ENCODE measurements at regions of chr15 and their contacts with region 1.

Region 1: GRCh38 chr15:89740137-89740536 is 10.9 kb downstream of the MESP1 start:
- DNase-seq: peak; percentile 71
- H3K4me3 Mint-ChIP-seq: no peak overlapping the region
- H3K27ac Mint-ChIP-seq: no peak overlapping the region
- H3K4me1 Mint-ChIP-seq: peaks cover 1% of the 10 kb centered on the region
- H3K27me3 Mint-ChIP-seq: peaks cover 11% of the 10 kb centered on the region

Region 2: DNA sequence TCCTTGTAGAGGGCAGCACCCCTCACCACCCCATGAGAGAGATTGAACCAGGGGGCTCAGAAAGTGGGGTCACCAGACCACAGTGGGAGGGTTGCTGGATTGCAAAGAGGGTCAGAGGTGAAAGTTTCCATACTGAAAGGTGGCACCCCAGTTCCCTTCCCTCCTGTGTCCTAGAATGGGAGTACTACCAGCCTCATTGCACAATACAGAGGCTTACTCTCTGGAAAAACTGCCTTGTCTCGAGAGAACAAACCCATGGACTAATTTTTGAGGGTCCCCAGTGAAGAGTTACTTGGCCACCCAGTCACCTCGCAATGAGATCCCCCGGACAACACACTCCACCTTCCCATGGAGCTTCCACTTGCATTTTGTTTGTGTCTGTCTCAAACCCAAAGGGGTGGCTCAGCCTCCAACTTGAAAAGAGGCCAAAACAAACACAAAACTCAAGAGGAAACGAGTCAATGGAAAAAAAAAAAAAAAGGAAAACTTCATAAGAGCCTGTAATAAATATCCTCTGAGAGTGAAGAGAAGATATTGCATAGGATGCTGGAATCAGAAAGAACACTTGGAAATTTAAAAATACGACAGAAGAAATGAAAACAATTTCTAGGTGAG is 54.6 kb after region 1 on chr15:
- CTCF ChIA-PET with region 1: no interaction called
- intact Hi-C with region 1: no loop called
- DNase-seq: no peak
- H3K4me3 Mint-ChIP-seq: no peak overlapping the region
- H3K27ac Mint-ChIP-seq: no peak overlapping the region
- H3K4me1 Mint-ChIP-seq: no peaks in the 10 kb centered on the region
- H3K27me3 Mint-ChIP-seq: peaks cover 3% of the 10 kb centered on the region

Region 3: GRCh38 chr15:90086868-90087268 is 346.7 kb after region 1 on chr15:
- CTCF ChIA-PET with region 1: interaction called, 4 read pairs
- intact Hi-C with region 1: loop called (anchors 5 kb)
- DNase-seq: peak; percentile 73
- H3K4me3 Mint-ChIP-seq: no peak overlapping the region
- H3K27ac Mint-ChIP-seq: no peak overlapping the region
- H3K4me1 Mint-ChIP-seq: peaks cover 6% of the 10 kb centered on the region
- H3K27me3 Mint-ChIP-seq: no peaks in the 10 kb centered on the region

Measured in activated naive CD4-positive, alpha-beta T cell treated with anti-CD3 and anti-CD28 coated beads for 36 hours (primary cell).